MCF 10A (cell line): ENCODE measurements at regions of chr19 and their contacts with region 1.

Region 1: DNA sequence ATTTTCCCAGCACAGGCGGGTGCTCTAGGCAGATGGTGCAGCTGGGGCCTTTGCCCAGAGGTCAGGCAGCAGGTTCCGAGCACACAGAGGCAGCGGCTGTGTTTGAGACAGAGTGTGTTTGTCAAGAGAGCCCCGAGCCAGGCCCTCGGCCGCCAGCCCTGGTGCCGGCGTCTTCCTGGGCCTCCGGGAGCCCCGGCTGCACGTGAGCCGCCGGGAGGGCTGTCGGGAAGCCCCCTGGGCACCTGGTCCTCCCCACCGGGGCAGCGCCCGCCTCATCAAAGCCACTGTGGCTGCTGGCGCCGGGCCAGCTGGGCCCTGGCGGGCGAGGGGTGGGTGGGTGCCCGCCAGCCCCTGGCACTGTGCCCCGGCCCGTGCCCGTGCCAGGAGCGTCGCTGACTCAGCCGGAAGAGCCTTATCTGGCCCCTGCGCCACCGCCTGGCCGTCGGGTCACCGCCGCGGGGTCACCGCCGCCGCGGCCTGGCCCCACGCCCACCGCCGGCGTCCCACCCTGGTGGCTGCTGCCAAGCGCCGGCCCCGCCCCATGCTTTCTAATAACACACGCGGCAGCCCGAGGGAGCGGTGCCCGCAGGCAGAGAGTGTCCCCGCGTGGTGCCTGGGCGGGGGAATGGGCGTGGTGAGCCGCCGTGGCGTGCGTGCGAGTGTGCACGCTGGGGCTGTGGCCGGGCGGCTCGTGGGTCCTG is 14.9 kb downstream of the ARID3A start:
- DNase-seq: peak; percentile 85
- H3K4me3 Mint-ChIP-seq: peak overlapping the region; percentile 66
- H3K27ac Mint-ChIP-seq: no peak overlapping the region
- H3K4me1 Mint-ChIP-seq: peaks cover 23% of the 10 kb centered on the region
- H3K27me3 Mint-ChIP-seq: no peaks in the 10 kb centered on the region
- CTCF ChIP-seq: no peak

Region 2: DNA sequence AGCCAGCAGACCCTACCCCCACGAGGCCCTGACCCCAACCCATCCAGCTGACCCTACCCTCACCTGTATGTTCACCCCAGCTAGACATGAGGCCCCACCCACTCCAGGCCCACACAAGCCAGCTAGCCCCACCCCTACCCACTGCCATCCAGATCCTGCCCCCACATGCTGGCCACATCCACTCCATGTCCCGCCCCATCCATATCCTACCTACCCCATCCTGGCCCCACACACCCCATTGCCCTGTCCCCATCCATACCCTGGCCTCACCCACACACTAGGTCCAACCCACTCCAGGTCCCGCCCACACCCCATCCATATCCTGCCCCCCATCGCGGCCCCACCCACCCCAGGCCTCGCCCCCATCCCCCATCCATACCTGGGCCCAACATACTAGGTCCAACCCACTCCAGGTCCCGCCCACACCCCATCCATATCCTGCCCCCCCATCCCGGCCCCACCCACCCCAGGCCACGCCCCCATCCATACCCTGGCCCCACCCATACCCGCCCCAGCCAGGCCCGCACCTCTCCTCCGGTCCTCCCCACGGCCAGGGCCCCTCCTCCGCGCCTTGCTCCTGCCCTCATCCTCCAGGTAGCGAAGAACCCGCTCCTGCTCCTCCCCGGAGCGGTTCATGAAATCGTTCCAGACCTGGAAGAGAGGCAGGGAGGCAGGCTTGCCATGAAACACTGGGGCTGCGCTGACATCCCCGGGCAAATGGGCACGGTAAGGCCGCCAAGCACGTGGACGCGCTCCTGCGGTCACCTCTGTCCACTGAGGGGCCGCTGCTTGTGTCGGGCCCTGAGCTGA is 40.2 kb before region 1 on chr19:
- CTCF ChIA-PET with region 1: no interaction called
- POLR2A ChIA-PET with region 1: no interaction called
- intact Hi-C with region 1: no loop called
- DNase-seq: peak; percentile 31
- H3K4me3 Mint-ChIP-seq: no peak overlapping the region
- H3K27ac Mint-ChIP-seq: no peak overlapping the region
- H3K4me1 Mint-ChIP-seq: no peaks in the 10 kb centered on the region
- H3K27me3 Mint-ChIP-seq: no peaks in the 10 kb centered on the region
- CTCF ChIP-seq: no peak

Region 3: GRCh38 chr19:958967-959820 is 18.5 kb after region 1 on chr19:
- CTCF ChIA-PET with region 1: no interaction called
- POLR2A ChIA-PET with region 1: no interaction called
- intact Hi-C with region 1: loop called (anchors 2 kb)
- DNase-seq: peak; percentile 69
- H3K4me3 Mint-ChIP-seq: peak overlapping the region; percentile 13
- H3K27ac Mint-ChIP-seq: no peak overlapping the region
- H3K4me1 Mint-ChIP-seq: peaks cover 16% of the 10 kb centered on the region
- H3K27me3 Mint-ChIP-seq: no peaks in the 10 kb centered on the region
- CTCF ChIP-seq: no peak

Region 4: DNA sequence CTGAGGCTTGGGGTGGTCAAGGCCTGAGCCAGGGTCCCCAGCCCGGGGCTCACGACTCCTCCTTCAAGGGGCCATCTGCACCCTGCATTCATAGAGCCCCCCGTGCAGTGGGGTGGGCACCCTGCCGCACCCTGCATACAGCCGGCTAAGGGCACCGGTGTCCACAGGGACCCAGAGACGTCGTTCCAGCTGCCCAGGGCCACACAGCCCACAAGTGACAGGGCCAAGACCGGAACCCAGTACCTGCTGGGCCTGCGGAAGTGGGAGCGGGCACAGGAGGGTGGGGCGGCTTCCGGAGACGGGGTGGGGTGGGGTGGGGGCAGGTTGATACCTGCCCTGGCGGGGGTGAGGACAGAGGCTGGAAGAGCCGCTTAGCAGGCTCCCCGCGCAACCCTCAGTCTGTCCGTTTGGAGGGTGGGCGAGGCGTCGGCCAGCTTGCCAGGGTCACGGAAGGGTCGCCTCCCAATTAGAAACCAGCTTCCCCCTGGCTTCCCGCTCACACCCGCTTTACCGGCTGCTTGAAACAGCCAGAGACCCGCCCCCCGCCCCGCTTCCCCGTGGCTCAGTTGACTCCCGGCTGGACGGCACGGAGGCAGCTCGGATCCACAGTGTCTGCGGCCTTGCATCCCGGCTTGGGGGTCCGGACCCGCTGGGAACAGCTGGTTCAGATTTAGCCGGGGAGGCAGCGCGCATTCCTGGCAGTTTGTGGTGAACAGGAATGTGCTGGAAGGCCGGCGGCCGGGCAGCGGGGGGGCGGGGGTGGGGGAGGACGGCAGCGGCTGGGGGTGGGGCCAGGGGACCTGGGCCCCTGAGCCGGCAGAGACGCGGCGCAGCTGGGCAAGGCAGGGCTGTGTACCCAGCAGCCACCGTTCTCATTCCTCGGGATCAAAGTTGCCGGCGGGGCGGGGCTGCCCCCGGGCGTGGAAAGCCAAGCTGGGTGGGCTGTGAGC is 87.5 kb after region 1 on chr19:
- CTCF ChIA-PET with region 1: no interaction called
- POLR2A ChIA-PET with region 1: no interaction called
- intact Hi-C with region 1: no loop called
- DNase-seq: peak; percentile 80
- H3K4me3 Mint-ChIP-seq: peak overlapping the region; percentile 86
- H3K27ac Mint-ChIP-seq: peak overlapping the region; percentile 66
- H3K4me1 Mint-ChIP-seq: peaks cover 12% of the 10 kb centered on the region
- H3K27me3 Mint-ChIP-seq: no peaks in the 10 kb centered on the region
- CTCF ChIP-seq: no peak

Region 5: GRCh38 chr19:1045247-1045603 is 104.5 kb after region 1 on chr19:
- CTCF ChIA-PET with region 1: no interaction called
- POLR2A ChIA-PET with region 1: no interaction called
- intact Hi-C with region 1: no loop called
- DNase-seq: peak; percentile 77
- H3K4me3 Mint-ChIP-seq: no peak overlapping the region
- H3K27ac Mint-ChIP-seq: no peak overlapping the region
- H3K4me1 Mint-ChIP-seq: no peaks in the 10 kb centered on the region
- H3K27me3 Mint-ChIP-seq: no peaks in the 10 kb centered on the region
- CTCF ChIP-seq: no peak